ENCODE measurements at regions of chr2 and their contacts with region 1.

Region 1: GRCh38 chr2:65640793-65641103 is 208.3 kb upstream of the SPRED2 start:
- DNase-seq: no peak
- H3K4me3 ChIP-seq: no peak overlapping the region
- H3K27ac ChIP-seq: no peak overlapping the region
- H3K4me1 ChIP-seq: no peaks in the 10 kb centered on the region
- H3K27me3 ChIP-seq: peaks cover 12 to 15% of the 10 kb centered on the region in 2 experiments
- CTCF ChIP-seq: no peak
- POLR2A ChIP-seq: no peak

Region 2: DNA sequence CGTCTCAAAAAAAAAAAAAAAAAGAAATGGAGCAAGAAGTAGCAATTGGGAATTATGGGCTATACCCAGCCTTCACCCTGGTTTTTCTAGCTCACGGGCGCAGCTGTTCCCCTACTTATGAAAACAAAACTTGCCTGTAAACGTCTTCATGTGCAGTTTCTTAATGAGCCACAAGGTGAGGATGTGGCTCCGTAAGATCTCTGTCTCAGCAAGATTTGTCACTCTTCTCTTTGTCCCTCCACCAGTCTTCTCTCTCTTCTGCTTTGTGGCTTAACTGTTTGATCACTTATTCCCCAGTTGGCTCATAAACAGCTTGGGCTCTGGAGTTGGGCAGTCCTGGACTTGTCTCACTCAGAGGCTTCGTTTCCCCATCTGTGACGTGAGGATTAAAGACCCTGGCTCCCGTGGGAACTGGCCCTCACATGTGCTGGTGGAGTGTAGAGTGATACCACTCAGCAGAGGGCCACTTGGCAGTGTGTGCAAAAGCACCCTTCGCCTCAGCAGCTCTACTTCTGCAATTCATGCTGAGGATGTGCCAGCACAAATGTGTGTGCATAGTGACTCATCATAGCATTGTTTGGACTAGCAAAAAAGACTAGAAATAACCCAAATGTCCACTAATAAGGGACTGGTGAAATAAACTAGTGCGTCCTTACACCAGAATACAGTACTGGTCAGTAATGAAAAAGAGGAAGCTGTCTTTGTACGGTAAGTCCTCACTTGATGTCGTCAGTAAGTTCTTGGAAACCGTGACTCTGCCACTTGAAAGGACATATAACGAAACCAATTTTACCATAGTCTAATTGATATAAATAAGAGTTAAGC is 575.8 kb before region 1 on chr2:
- CTCF ChIA-PET with region 1: no interaction called
- POLR2A ChIA-PET with region 1: no interaction called
- dilution Hi-C with region 1: no loop called
- intact Hi-C with region 1: no loop called
- DNase-seq: peak; percentile 93
- H3K4me3 ChIP-seq: no peak overlapping the region
- H3K27ac ChIP-seq: peak overlapping the region; percentile 48
- H3K4me1 ChIP-seq: peaks cover 33% of the 10 kb centered on the region
- H3K27me3 ChIP-seq: no peaks in the 10 kb centered on the region
- CTCF ChIP-seq: peak; percentile 54 to 61
- POLR2A ChIP-seq: no peak

Region 3: DNA sequence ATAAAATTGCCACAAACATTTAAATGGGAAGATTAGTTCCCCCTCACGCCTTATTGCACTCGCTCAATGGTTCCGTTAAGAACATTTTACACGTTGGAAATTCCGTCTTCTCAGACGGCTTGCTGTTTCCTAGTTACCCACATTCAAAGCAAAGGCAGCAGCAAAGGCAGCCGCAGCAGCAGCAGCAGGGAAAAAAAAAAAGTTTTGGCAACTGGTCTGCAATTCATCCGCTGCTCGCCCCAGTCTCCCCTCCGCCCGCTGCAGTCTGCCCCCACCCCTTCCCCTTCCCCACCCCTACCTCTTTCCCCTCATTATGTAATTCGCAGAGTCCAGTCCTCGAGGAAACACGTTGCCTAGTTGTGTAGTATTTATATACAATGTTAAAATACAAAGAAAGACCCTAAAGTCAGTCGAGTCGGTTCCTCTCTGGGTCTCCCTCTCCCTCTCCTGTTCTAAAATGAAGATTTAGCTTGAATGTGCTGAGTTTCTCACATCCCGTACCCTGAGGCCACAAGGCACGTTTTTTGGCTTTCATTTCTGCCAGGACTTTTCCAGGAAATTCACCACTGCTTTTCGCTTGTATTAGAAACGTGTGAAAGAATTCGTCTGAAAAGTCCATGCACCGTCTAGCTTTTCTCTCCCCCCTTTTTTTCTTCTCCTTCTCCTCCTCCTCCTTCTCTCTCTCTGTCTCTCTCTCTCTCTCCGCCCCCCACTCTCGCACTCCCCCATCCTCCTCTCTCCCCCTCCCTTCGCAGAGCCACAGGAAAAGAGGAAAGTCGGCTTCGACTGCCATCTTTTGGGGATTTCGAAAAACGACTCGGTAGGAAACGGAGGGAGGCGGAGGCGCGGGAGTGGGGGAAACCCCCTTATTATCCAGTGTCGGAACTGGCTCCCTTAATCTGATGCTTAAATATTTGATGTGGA is 934.2 kb after region 1 on chr2:
- CTCF ChIA-PET with region 1: interaction called, 12 read pairs
- POLR2A ChIA-PET with region 1: no interaction called
- dilution Hi-C with region 1: no loop called
- intact Hi-C with region 1: loop called (anchors 1 kb)
- DNase-seq: peak; percentile 81
- H3K4me3 ChIP-seq: peak overlapping the region; percentile 56 to 92 (median 85)
- H3K27ac ChIP-seq: peak overlapping the region; percentile 74
- H3K4me1 ChIP-seq: peaks cover 18% of the 10 kb centered on the region
- H3K27me3 ChIP-seq: peaks cover 32 to 38% of the 10 kb centered on the region in 2 experiments
- CTCF ChIP-seq: peak; percentile 45 to 60
- POLR2A ChIP-seq: no peak

Region 4: DNA sequence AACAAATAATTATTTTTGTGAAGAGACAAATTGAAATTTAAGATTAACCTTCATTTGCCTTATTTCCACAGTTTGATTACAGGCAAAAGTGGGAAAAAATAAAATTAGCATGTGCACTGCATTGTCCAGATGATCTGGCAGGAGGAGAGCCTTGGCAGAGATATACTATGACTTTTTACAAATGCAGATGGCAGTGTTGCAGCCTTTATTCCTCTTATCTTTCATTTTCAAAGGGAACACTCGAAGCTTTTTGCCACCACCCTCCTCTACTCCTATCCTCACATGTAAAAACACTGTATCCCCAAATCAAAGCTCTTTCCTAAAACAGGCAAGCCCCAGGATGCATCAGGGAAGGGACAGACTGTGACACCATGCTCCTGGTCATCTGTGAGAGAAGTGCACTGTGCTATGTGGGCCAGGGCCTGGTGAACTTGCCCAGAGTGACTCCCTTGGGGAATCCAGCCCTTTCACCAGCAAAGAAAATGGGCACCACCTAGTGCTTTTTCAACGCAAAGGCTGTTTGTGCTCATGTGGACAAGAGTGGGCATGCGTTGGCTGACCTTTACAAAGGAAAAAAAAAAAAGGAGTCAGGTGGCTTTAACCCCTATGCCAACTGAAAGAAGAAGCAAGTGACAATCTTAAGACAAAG is 1681.7 kb after region 1 on chr2:
- CTCF ChIA-PET with region 1: no interaction called
- POLR2A ChIA-PET with region 1: no interaction called
- dilution Hi-C with region 1: no loop called
- intact Hi-C with region 1: loop called (anchors 5 kb)
- DNase-seq: peak; percentile 28
- H3K4me3 ChIP-seq: no peak overlapping the region
- H3K27ac ChIP-seq: no peak overlapping the region
- H3K4me1 ChIP-seq: no peaks in the 10 kb centered on the region
- H3K27me3 ChIP-seq: no peaks in the 10 kb centered on the region
- CTCF ChIP-seq: peak in 1 of 2 donors; percentile 22
- POLR2A ChIP-seq: no peak

Region 5: DNA sequence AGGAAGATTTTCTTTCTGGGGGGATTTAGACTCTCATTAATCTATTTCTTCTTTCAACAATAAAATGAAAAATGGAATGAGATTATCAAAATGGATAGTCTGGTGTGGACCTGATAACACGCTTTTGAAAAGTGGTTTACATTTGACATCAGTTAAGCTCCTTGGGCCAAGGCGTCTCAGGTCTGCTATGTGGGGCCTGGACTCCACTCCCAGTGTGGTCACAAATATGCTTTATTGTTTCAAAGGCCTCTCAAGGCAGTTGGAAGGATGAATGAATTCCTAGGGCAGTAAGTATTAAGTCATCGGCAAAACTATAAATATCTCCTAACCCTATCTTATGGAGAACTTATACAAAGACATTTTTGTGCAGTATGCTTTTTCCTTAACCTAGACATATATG is 1830.9 kb after region 1 on chr2:
- CTCF ChIA-PET with region 1: interaction called, 8 read pairs
- POLR2A ChIA-PET with region 1: no interaction called
- dilution Hi-C with region 1: no loop called
- intact Hi-C with region 1: loop called (anchors 5 kb)
- DNase-seq: no peak
- H3K4me3 ChIP-seq: no peak overlapping the region
- H3K27ac ChIP-seq: no peak overlapping the region
- H3K4me1 ChIP-seq: no peaks in the 10 kb centered on the region
- H3K27me3 ChIP-seq: no peaks in the 10 kb centered on the region
- CTCF ChIP-seq: no peak
- POLR2A ChIP-seq: no peak